Heart right ventricle (tissue), 16 donors: ENCODE measurements at regions of chr1 and their contacts with region 1.

Region 1: DNA sequence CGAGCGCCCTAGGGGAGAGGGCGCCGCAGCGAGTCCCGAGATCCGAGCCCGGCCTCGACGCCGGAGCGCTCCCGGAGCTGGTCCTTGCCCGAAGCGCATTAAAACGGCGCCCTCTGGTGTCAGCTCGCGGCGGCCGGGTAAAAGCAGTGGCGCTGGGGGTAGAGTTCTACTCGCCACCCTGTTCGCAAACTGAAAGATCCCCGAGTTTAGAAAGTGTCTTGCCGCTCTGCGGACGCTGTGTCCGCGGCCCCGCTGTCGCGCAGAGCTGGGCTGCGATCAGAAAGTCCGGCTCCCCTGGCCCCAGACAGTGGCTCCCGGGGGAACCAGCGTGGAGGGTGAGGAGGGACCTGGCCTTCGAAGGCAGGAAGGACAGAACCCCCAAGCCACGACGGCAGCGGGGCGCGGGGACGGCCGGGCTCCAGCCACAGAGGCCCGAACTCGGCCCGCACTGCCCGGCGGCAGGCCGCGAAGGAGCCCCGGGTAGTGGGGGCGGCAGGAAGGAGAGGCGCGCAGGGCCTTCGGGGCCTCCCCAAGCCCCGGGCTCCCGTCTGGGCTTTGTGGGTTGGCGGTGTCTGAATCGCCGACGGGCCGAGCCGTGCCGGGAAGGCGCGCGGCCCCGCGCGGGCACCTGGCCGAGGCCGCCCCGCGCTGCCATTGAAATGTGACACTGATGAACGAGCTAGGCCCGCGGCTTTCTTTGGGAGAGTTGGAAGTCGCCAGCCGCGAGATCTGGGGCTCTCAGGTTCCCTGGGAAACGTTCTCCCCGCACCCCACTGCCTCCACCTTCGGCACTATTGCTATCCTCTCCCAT is 39.1 kb upstream of the NFIA start:
- DNase-seq: peak; percentile 91 to 94
- ATAC-seq: peak; percentile 95 to 99 (median 97)
- H3K4me3 ChIP-seq: peak overlapping the region; percentile 23 to 70 (median 63)
- H3K27ac ChIP-seq: peak overlapping the region in 9 of 10 donors; percentile 46 to 85 (median 77)
- H3K4me1 ChIP-seq: peaks cover 0 to 11% (median 5%) of the 10 kb centered on the region in 9 donors
- H3K27me3 ChIP-seq: peaks cover 0 to 14% (median 0%) of the 10 kb centered on the region in 7 donors
- CTCF ChIP-seq: peak; percentile 82 to 96 (median 94)

Region 2: GRCh38 chr1:60274422-60275290 is 768.6 kb before region 1 on chr1:
- intact Hi-C with region 1: loop called in 1 of 10 experiments (anchors 5 kb)
- DNase-seq: no peak
- ATAC-seq: peak in 3 of 8 donors; percentile 65 to 83 (median 74)
- H3K4me3 ChIP-seq: no peak overlapping the region
- H3K27ac ChIP-seq: no peak overlapping the region
- H3K4me1 ChIP-seq: no peaks in the 10 kb centered on the region
- H3K27me3 ChIP-seq: no peaks in the 10 kb centered on the region
- CTCF ChIP-seq: no peak

Region 3: DNA sequence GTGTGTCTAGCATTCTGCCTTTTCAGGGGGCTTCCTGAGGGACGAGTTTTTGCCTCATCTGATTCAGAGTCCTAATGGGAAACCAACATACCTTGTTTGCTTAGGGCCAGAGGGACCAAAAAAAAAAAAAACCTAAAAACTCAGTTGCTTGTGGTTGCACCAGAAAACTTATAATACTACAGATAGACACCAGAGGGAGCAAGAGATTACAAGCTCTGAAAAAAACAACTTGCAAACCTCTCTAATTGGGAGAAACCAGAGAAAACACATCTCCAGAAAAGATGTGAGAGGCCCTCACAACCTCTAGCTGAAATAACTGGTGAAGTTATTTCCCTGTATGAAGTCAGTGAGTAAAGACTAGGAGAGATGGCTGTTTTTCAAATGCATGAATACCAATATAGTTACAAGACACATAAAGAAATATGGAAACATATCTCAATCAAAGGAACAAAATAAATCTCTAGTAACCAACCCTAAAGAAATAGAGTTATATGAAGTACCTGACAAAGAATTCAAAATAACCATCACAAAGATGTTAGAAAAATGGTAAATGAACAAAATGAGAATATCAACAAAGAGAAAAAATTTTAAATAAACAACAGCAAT is 194.5 kb before region 1 on chr1:
- intact Hi-C with region 1: loop called (anchors 2 to 10 kb)
- DNase-seq: no peak
- ATAC-seq: no peak
- H3K4me3 ChIP-seq: no peak overlapping the region
- H3K27ac ChIP-seq: no peak overlapping the region
- H3K4me1 ChIP-seq: no peaks in the 10 kb centered on the region
- H3K27me3 ChIP-seq: no peaks in the 10 kb centered on the region
- CTCF ChIP-seq: peak; percentile 21 to 66 (median 59)

Region 4: GRCh38 chr1:60978421-60979357 is 64.5 kb before region 1 on chr1:
- intact Hi-C with region 1: loop called in 9 of 10 experiments (anchors 2 to 10 kb)
- DNase-seq: peak in 1 of 2 donors; percentile 23
- ATAC-seq: peak in 4 of 8 donors; percentile 39 to 61 (median 43)
- H3K4me3 ChIP-seq: no peak overlapping the region
- H3K27ac ChIP-seq: no peak overlapping the region
- H3K4me1 ChIP-seq: peaks cover 0 to 14% (median 6%) of the 10 kb centered on the region in 9 donors
- H3K27me3 ChIP-seq: no peaks in the 10 kb centered on the region
- CTCF ChIP-seq: peak in 8 of 9 donors; percentile 16 to 67 (median 53)